GM10248 (cell line): ENCODE measurements at regions of chr13 and their contacts with region 1.

Region 1: GRCh38 chr13:86870444-86870843 is 800.7 kb upstream of the SLITRK5 start:
- DNase-seq: no peak
- CTCF ChIP-seq: peak; percentile 39

Region 2: DNA sequence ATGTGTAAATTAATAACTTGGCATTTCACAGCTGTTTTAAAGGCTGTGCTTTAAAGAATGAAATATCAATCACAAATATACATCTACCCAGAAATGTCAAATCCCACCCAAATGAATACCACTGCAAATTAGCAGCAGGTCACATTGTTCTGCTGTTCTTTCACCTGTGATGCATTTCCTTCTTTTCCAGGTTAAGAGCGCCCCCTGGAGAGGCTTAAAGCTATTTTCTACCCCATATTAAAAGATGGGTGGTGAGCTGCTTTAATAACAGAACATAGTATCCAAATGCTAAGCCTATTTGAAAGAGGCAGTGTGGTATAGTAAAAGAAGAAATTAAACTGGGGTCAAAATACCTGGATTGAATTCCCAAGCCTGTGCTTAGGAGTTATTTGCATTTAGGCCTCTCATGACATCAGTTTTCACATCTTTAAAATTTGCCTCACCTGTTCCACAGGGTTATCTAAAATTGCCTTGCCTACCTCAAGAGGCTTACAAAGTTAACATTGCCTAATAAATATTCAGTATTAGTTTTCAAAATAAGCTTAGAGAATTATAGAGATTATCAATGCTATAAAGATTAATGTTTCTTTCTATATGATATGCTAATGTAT is 403.9 kb after region 1 on chr13:
- CTCF ChIA-PET with region 1: interaction called, 23 read pairs
- POLR2A ChIA-PET with region 1: no interaction called
- DNase-seq: peak; percentile 7
- CTCF ChIP-seq: peak; percentile 59